ENCODE measurements at regions of chr2 and their contacts with region 1.

Region 1: DNA sequence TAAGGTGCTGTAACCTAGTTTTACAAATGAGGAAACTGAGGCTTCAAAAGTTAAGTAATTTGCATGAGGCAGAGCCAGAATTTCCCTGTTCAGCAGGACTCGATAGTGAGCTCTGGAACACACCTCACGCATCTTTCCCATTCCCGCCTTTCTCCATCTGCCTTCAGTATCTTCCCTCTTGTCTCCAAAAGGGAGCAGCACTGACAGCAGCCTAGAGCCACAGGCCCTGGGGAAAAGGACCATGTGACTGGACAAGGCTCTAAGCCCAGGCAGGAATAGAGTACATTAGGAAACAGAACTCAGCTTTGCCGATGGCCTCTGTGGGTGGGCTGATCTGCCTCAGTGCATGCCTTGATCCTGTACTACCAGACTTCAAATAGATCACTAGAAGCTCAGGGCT is 21.5 kb downstream of the GPR155 start:
- DNase-seq: peak; percentile 32
- ATAC-seq: peak; percentile 88
- H3K4me3 ChIP-seq: no peak overlapping the region
- H3K27ac ChIP-seq: no peak overlapping the region
- H3K4me1 ChIP-seq: no peaks in the 10 kb centered on the region
- H3K27me3 ChIP-seq: no peaks in the 10 kb centered on the region
- CTCF ChIP-seq: peak; percentile 29; the same call in 1 of the 2 replicates
- EP300 ChIP-seq: no peak
- POLR2A ChIP-seq: no peak
- RAD21 ChIP-seq: no peak

Region 2: GRCh38 chr2:174522553-174522952 is 57.2 kb after region 1 on chr2:
- CTCF ChIA-PET with region 1: interaction called, 15 read pairs
- POLR2A ChIA-PET with region 1: no interaction called
- in situ Hi-C with region 1: no loop called
- intact Hi-C with region 1: loop called (anchors 1 kb)
- DNase-seq: no peak
- ATAC-seq: no peak
- H3K4me3 ChIP-seq: no peak overlapping the region
- H3K27ac ChIP-seq: no peak overlapping the region
- H3K4me1 ChIP-seq: no peaks in the 10 kb centered on the region
- H3K27me3 ChIP-seq: peaks cover 0 to 33% of the 10 kb centered on the region in 2 experiments; a peak in 2 of 5 replicates
- CTCF ChIP-seq: peak; percentile 27; the same call in 1 of the 2 replicates
- EP300 ChIP-seq: no peak
- POLR2A ChIP-seq: no peak
- RAD21 ChIP-seq: no peak

Region 3: GRCh38 chr2:174546581-174547506 is 81.5 kb after region 1 on chr2:
- CTCF ChIA-PET with region 1: interaction called, 15 read pairs
- POLR2A ChIA-PET with region 1: no interaction called
- in situ Hi-C with region 1: no loop called
- intact Hi-C with region 1: loop called (anchors 1 kb)
- DNase-seq: peak; percentile 38
- ATAC-seq: peak; percentile 93
- H3K4me3 ChIP-seq: no peak overlapping the region
- H3K27ac ChIP-seq: no peak overlapping the region
- H3K4me1 ChIP-seq: no peaks in the 10 kb centered on the region
- H3K27me3 ChIP-seq: peaks cover 2 to 5% of the 10 kb centered on the region in 2 experiments; a peak in 2 of 5 replicates
- CTCF ChIP-seq: peak; percentile 67
- EP300 ChIP-seq: no peak
- POLR2A ChIP-seq: no peak
- RAD21 ChIP-seq: no peak

Region 4: GRCh38 chr2:174603280-174603679 is 138.0 kb after region 1 on chr2:
- CTCF ChIA-PET with region 1: interaction called, 11 read pairs
- POLR2A ChIA-PET with region 1: no interaction called
- in situ Hi-C with region 1: no loop called
- intact Hi-C with region 1: loop called (anchors 1 kb)
- DNase-seq: peak; percentile 38
- ATAC-seq: peak; percentile 84
- H3K4me3 ChIP-seq: no peak overlapping the region
- H3K27ac ChIP-seq: no peak overlapping the region
- H3K4me1 ChIP-seq: no peaks in the 10 kb centered on the region
- H3K27me3 ChIP-seq: no peaks in the 10 kb centered on the region
- CTCF ChIP-seq: peak; percentile 73
- EP300 ChIP-seq: no peak
- POLR2A ChIP-seq: no peak
- RAD21 ChIP-seq: no peak

Region 5: DNA sequence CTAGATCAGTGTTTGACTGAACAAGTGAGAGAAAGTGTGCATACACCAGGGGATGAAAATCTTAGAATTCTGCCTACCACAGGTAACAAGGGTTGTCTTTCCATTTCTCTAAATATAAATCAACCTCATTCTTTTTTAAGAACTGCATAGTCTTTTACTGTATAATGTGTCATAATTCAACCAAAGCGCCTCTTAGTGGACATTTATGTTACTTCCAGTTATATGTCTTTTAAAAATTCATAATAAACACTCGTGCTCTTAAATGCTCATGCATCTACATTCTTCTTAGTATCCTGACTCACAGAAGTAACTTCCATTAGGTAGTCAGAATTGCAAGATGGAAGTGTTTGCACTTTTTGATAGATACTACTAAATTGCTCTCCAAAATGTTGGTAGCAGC is 222.8 kb after region 1 on chr2:
- CTCF ChIA-PET with region 1: interaction called, 11 read pairs
- POLR2A ChIA-PET with region 1: no interaction called
- in situ Hi-C with region 1: loop called (anchors 5 kb)
- intact Hi-C with region 1: loop called (anchors 2 kb)
- DNase-seq: no peak
- ATAC-seq: no peak
- H3K4me3 ChIP-seq: no peak overlapping the region
- H3K27ac ChIP-seq: no peak overlapping the region
- H3K4me1 ChIP-seq: peaks cover 3% of the 10 kb centered on the region; the same call in 1 of the 2 replicates
- H3K27me3 ChIP-seq: peaks cover 0 to 24% of the 10 kb centered on the region in 2 experiments; a peak in 4 of 5 replicates
- CTCF ChIP-seq: no peak
- EP300 ChIP-seq: no peak
- POLR2A ChIP-seq: no peak
- RAD21 ChIP-seq: no peak

Measured in HepG2 (cell line).